HEK293 (cell line): ENCODE measurements at regions of chr4 and their contacts with region 1.

Region 1: DNA sequence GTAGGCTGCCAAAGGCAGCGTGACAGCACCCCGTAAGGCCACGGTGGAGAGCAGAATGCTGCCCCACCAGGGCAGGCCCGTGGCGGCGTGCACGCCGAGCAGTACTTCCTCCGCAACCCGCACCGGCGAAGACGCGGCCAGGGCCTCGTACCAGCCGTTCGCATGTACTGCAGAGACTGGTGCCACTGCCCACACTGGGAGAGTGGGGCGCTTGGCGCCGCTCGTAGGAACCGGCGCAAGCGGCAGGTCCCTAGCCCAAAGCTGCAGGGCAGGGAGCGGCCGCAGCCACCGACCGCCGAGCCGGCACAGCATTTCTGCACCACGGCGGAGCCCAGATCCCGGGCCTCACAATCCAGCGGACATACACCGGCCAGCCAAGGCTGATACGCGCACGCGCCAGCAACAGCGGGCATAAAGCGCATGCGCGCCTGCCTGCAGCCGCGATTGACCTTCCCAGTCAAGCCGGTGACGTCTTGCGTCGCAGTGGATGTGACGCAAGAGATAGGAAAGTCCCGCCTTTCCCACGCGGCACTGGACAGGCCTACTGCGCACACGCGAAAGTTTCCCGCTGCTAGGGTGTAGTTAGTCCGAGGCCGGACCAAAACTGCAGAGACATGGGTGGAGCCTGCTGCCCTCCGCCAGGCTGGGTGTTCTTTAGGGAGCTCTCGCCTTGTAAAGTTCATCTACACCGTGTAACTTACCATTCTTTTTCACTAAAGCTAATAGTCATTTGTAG is at the start of gene COX18:
- H3K4me3 ChIP-seq: peak within 1 kb of the TSS; percentile 73
- H3K27ac ChIP-seq: peak within 1 kb of the TSS; percentile 81
- H3K4me1 ChIP-seq: no peaks in the 10 kb centered on the region
- CTCF ChIP-seq: peak; percentile 90

Region 2: GRCh38 chr4:73258686-73259570 is 189.4 kb after region 1 on chr4 and contains the start of gene ANKRD17:
- CTCF ChIA-PET with region 1: no interaction called
- POLR2A ChIA-PET with region 1: interaction called, 11 read pairs
- H3K4me3 ChIP-seq: peak within 1 kb of the TSS; percentile 90
- H3K27ac ChIP-seq: peak within 1 kb of the TSS; percentile 87
- H3K4me1 ChIP-seq: no peaks in the 10 kb centered on the region
- CTCF ChIP-seq: peak; percentile 38